Ovary (tissue), 10 donors: ENCODE measurements at regions of chr11 and their contacts with region 1.

Region 1: DNA sequence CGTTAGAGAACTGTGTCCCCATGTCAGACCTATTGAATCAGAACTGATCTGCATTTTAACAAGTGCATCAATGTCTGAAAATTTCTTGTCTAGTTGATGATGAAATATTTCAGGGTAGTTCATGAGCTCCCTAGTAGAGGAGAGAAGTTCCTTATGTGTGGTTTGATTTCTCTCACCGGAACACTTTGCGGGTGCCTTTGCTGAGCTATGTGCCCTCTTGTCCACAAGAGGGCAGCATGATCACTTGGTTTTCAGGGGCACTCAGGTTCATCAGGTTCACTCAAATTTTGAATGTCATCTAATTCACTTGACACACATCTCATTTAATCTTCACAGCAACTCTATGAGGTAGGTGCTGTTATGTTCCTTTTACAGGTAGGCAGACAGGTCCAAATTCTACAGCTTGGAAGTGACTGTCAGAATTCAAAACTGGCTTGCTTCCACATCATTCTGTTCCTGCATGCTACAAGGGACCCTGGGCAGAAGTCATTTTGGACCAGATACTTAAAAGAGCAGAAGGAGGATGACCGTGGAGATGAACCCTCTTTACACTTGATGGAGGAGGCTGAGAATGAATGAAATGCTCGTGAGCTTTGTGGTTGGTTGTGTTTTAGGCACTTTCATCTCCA is 55.6 kb downstream of the P4HA3 start:
- DNase-seq: peak; percentile 23 to 58 (median 51)
- H3K4me3 ChIP-seq: no peak overlapping the region
- H3K27ac ChIP-seq: no peak overlapping the region
- H3K4me1 ChIP-seq: peaks cover 5% of the 10 kb centered on the region
- H3K27me3 ChIP-seq: no peaks in the 10 kb centered on the region
- CTCF ChIP-seq: peak; percentile 53 to 75 (median 74)
- EP300 ChIP-seq: no peak
- POLR2A ChIP-seq: no peak

Region 2: GRCh38 chr11:74443071-74443864 is 187.4 kb after region 1 on chr11:
- intact Hi-C with region 1: loop called in 3 of 4 experiments (anchors 5 kb)
- DNase-seq: no peak
- H3K4me3 ChIP-seq: no peak overlapping the region
- H3K27ac ChIP-seq: peak overlapping the region in 1 of 2 donors; percentile 82
- H3K4me1 ChIP-seq: peaks cover 12% of the 10 kb centered on the region
- H3K27me3 ChIP-seq: no peaks in the 10 kb centered on the region
- CTCF ChIP-seq: no peak
- EP300 ChIP-seq: no peak
- POLR2A ChIP-seq: no peak

Region 3: GRCh38 chr11:74570266-74571061 is 314.6 kb after region 1 on chr11:
- intact Hi-C with region 1: loop called in 3 of 4 experiments (anchors 5 to 10 kb)
- DNase-seq: peak in 4 of 5 donors; percentile 30 to 58 (median 38)
- H3K4me3 ChIP-seq: no peak overlapping the region
- H3K27ac ChIP-seq: no peak overlapping the region
- H3K4me1 ChIP-seq: no peaks in the 10 kb centered on the region
- H3K27me3 ChIP-seq: no peaks in the 10 kb centered on the region
- CTCF ChIP-seq: peak; percentile 23 to 68 (median 59)
- EP300 ChIP-seq: no peak
- POLR2A ChIP-seq: no peak